ENCODE measurements at regions of chr6 and their contacts with region 1.

Region 1: DNA sequence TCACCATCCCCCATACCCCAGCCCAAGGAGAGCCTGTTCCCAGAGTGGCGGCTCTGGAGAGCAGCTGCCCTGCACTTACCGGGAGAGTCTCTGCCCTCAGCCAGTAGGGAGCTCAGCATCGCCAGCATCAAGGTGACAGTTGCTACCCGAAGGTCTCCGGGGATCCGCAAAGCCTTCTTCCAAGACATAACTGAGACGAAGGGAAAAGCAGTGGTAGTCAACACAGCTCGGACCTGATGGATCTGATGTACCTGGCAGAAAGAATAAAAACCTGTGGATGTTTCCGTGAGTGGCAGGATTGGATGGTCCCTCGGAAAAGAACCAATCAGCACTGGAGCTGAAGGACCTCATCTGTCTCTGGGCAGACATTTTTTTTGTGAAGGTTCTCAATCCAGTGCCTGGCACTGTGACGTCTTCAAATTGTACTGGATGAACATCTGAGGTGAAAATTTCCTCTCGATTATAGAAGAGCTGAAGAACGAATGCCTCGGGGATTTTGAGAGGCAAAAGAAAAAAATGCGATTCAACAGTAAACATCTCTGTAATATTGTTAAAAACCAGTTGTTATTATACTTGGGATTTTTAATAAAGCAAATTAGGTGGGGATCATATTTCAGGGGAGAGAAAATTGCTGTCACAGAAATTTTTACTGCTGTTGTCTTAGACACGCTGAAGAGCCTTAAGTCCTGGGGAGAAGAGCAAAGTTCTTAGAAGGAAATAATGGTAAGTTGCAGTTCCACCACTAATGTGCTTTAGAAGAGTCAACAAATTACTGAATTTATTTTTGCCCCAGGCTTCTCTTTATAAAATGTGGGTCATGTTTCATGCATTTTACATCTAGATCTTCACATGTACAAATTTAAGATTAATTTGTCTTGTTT is at the start of gene HLA-DQB1:
- DNase-seq: peak; percentile 85
- ATAC-seq: peak; percentile 61
- H3K4me3 ChIP-seq: peak within 1 kb of the TSS; percentile 57 to 98 (median 69)
- H3K4me3 Mint-ChIP-seq: peak within 1 kb of the TSS; percentile 96
- H3K27ac ChIP-seq: peak within 1 kb of the TSS; percentile 96 to 99
- H3K27ac Mint-ChIP-seq: peak within 1 kb of the TSS; percentile 97
- H3K4me1 ChIP-seq: peaks cover 23 to 34% of the 10 kb centered on the region in 2 donors
- H3K4me1 Mint-ChIP-seq: peaks cover 62% of the 10 kb centered on the region
- H3K27me3 ChIP-seq: no peaks in the 10 kb centered on the region
- H3K27me3 Mint-ChIP-seq: no peaks in the 10 kb centered on the region
- CTCF ChIP-seq: no peak
- total RNA-seq, gene HLA-DQB1: 267 and 287 TPM in 2 replicates

Region 2: DNA sequence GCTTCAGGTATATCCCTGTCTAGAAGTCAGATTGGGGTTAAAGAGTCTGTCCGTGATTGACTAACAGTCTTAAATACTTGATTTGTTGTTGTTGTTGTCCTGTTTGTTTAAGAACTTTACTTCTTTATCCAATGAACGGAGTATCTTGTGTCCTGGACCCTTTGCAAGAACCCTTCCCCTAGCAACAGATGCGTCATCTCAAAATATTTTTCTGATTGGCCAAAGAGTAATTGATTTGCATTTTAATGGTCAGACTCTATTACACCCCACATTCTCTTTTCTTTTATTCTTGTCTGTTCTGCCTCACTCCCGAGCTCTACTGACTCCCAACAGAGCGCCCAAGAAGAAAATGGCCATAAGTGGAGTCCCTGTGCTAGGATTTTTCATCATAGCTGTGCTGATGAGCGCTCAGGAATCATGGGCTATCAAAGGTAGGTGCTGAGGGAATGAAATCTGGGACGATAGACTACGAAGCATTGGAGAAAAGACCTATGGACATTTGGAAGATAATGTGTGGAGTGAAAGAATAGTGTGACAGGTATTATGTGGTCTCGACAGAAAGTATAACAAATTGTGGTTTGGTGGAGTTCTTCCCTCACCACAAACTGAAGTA is 227.0 kb before region 1 on chr6 and contains the start of gene HLA-DRA:
- CTCF ChIA-PET with region 1: interaction called, 4 read pairs
- POLR2A ChIA-PET with region 1: interaction called, 7 read pairs
- intact Hi-C with region 1: loop called (anchors 10 kb)
- DNase-seq: peak; percentile 97
- ATAC-seq: peak; percentile 69
- H3K4me3 ChIP-seq: peak within 1 kb of the TSS; percentile 77 to 100 (median 99)
- H3K4me3 Mint-ChIP-seq: peak within 1 kb of the TSS; percentile 98
- H3K27ac ChIP-seq: peak within 1 kb of the TSS; percentile 99 to 100
- H3K27ac Mint-ChIP-seq: peak within 1 kb of the TSS; percentile 99
- H3K4me1 ChIP-seq: peaks cover 70 to 71% of the 10 kb centered on the region in 2 donors
- H3K4me1 Mint-ChIP-seq: peaks cover 80% of the 10 kb centered on the region
- H3K27me3 ChIP-seq: no peaks in the 10 kb centered on the region
- H3K27me3 Mint-ChIP-seq: no peaks in the 10 kb centered on the region
- CTCF ChIP-seq: no peak
- total RNA-seq, gene HLA-DRA: 2,785 and 2,881 TPM in 2 replicates

Region 3: GRCh38 chr6:32609731-32610640 is 56.7 kb before region 1 on chr6:
- CTCF ChIA-PET with region 1: no interaction called
- POLR2A ChIA-PET with region 1: interaction called, 5 read pairs
- intact Hi-C with region 1: loop called (anchors 10 kb)
- DNase-seq: peak; percentile 99
- ATAC-seq: peak; percentile 88
- H3K4me3 ChIP-seq: peak overlapping the region in 4 of 5 experiments; percentile 25 to 41 (median 30)
- H3K4me3 Mint-ChIP-seq: no peak overlapping the region
- H3K27ac ChIP-seq: peak overlapping the region; percentile 99 to 100
- H3K27ac Mint-ChIP-seq: no peak overlapping the region
- H3K4me1 ChIP-seq: peaks cover 47 to 53% of the 10 kb centered on the region in 2 donors
- H3K4me1 Mint-ChIP-seq: peaks cover 59% of the 10 kb centered on the region
- H3K27me3 ChIP-seq: no peaks in the 10 kb centered on the region
- H3K27me3 Mint-ChIP-seq: no peaks in the 10 kb centered on the region
- CTCF ChIP-seq: no peak

Region 4: DNA sequence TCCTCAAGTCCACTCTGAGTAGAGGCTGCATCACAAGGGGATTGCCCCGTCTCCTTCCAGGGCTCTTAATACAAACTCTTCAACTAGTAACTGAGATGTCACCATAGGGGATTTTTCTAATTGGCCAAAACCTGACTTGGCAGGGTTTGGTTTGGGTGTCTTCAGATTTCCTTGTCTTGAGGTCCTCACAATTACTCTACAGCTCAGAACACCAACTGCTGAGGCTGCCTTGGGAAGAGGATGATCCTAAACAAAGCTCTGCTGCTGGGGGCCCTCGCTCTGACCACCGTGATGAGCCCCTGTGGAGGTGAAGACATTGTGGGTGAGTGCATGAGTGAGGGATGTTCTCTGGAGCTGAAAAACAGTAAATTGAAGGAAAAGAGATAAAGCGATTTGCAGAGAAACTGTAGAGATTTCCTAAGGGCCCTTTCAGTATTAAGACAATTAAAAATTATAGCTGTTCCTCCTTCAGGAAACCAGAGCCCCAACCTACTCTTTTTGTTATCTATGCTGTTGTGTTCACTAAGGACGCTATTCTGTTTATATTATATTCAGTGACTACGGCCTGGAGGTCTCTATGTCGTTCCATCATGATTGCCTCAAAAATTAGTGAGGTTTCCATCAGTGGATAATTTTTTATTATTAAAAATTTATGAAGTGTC is 29.3 kb before region 1 on chr6 and contains the start of gene HLA-DQA1:
- CTCF ChIA-PET with region 1: interaction called, 3 read pairs
- POLR2A ChIA-PET with region 1: interaction called, 13 read pairs
- intact Hi-C with region 1: no loop called
- DNase-seq: peak; percentile 94
- ATAC-seq: peak; percentile 89
- H3K4me3 ChIP-seq: peak within 1 kb of the TSS; percentile 49 to 100 (median 66)
- H3K4me3 Mint-ChIP-seq: peak within 1 kb of the TSS; percentile 99
- H3K27ac ChIP-seq: peak within 1 kb of the TSS; percentile 94 to 98
- H3K27ac Mint-ChIP-seq: peak within 1 kb of the TSS; percentile 99
- H3K4me1 ChIP-seq: peaks cover 44 to 52% of the 10 kb centered on the region in 2 donors
- H3K4me1 Mint-ChIP-seq: peaks cover 68% of the 10 kb centered on the region
- H3K27me3 ChIP-seq: no peaks in the 10 kb centered on the region
- H3K27me3 Mint-ChIP-seq: no peaks in the 10 kb centered on the region
- CTCF ChIP-seq: no peak
- total RNA-seq, gene HLA-DQA1: 463 and 489 TPM in 2 replicates

Region 5: GRCh38 chr6:32692019-32692418 is 25.4 kb after region 1 on chr6:
- CTCF ChIA-PET with region 1: interaction called, 43 read pairs
- POLR2A ChIA-PET with region 1: interaction called, 123 read pairs
- intact Hi-C with region 1: loop called (anchors 1 kb)
- DNase-seq: peak; percentile 85
- ATAC-seq: peak; percentile 60
- H3K4me3 ChIP-seq: no peak overlapping the region
- H3K4me3 Mint-ChIP-seq: peak overlapping the region; percentile 53
- H3K27ac ChIP-seq: peak overlapping the region; percentile 68 to 95
- H3K27ac Mint-ChIP-seq: peak overlapping the region; percentile 85
- H3K4me1 ChIP-seq: peaks cover 27 to 28% of the 10 kb centered on the region in 2 donors
- H3K4me1 Mint-ChIP-seq: peaks cover 33% of the 10 kb centered on the region
- H3K27me3 ChIP-seq: no peaks in the 10 kb centered on the region
- H3K27me3 Mint-ChIP-seq: no peaks in the 10 kb centered on the region
- CTCF ChIP-seq: peak; percentile 42

Region 6: GRCh38 chr6:32761072-32761471 is 94.4 kb after region 1 on chr6:
- CTCF ChIA-PET with region 1: interaction called, 11 read pairs
- POLR2A ChIA-PET with region 1: interaction called, 63 read pairs
- intact Hi-C with region 1: no loop called
- DNase-seq: peak; percentile 46
- ATAC-seq: no peak
- H3K4me3 ChIP-seq: peak overlapping the region in 2 of 5 experiments; percentile 3
- H3K4me3 Mint-ChIP-seq: peak overlapping the region; percentile 78
- H3K27ac ChIP-seq: no peak overlapping the region
- H3K27ac Mint-ChIP-seq: peak overlapping the region; percentile 72
- H3K4me1 ChIP-seq: peaks cover 0 to 8% of the 10 kb centered on the region in 2 donors
- H3K4me1 Mint-ChIP-seq: peaks cover 6% of the 10 kb centered on the region
- H3K27me3 ChIP-seq: peaks cover 0 to 11% (median 2%) of the 10 kb centered on the region in 4 experiments
- H3K27me3 Mint-ChIP-seq: peaks cover 35% of the 10 kb centered on the region
- CTCF ChIP-seq: no peak

Region 7: GRCh38 chr6:32843979-32844838 is 177.5 kb after region 1 on chr6 and contains the start of gene PSMB8:
- CTCF ChIA-PET with region 1: no interaction called
- POLR2A ChIA-PET with region 1: interaction called, 3 read pairs
- intact Hi-C with region 1: loop called (anchors 5 kb)
- DNase-seq: peak; percentile 99
- ATAC-seq: peak; percentile 78
- H3K4me3 ChIP-seq: peak within 1 kb of the TSS; percentile 88 to 100 (median 95)
- H3K4me3 Mint-ChIP-seq: peak within 1 kb of the TSS; percentile 95
- H3K27ac ChIP-seq: peak within 1 kb of the TSS; percentile 96 to 97
- H3K27ac Mint-ChIP-seq: peak within 1 kb of the TSS; percentile 99
- H3K4me1 ChIP-seq: peaks cover 72 to 81% of the 10 kb centered on the region in 2 donors
- H3K4me1 Mint-ChIP-seq: peaks cover 86% of the 10 kb centered on the region
- H3K27me3 ChIP-seq: no peaks in the 10 kb centered on the region
- H3K27me3 Mint-ChIP-seq: no peaks in the 10 kb centered on the region
- CTCF ChIP-seq: no peak
- total RNA-seq, gene PSMB8: 127 and 129 TPM in 2 replicates